Naive thymus-derived CD4-positive, alpha-beta T cell (primary cell): ENCODE measurements at regions of chr9 and their contacts with region 1.

Region 1: DNA sequence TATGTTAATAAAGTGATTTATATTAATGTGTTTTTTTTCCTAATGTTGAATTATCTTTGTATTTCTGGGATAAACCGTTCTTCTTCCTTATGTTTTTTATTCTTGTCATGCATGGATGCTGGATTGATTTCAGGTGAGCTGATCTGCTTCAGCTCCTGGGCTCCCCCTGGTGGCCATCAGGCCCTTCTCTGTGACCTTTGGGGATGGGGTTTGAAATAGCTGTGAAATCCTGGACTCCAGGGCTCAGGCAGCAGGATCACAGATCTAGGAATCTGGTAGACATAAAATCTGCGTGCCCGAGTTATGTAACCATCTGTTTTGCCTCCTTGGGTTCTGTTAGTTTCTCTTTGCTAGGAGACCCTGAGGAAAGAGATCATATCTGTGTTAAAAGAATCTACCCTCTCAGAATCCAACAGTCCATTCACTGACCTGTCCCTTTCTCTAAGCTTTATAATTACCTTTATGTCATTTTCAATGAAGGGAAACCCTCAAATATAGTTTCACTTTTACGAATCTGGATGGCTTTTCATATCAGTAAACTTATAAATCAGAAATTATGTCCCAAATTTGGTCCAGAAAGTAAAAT is 12.2 kb upstream of the OR13J1 start:
- DNase-seq: peak; percentile 54 to 83 (median 71)
- ATAC-seq: peak; percentile 72
- H3K4me3 ChIP-seq: no peak overlapping the region
- H3K4me3 Mint-ChIP-seq: peak overlapping the region in 1 of 10 donors; percentile 18
- H3K27ac ChIP-seq: no peak overlapping the region
- H3K27ac Mint-ChIP-seq: no peak overlapping the region
- H3K4me1 ChIP-seq: no peaks in the 10 kb centered on the region
- H3K4me1 Mint-ChIP-seq: peaks cover 0 to 2% (median 0%) of the 10 kb centered on the region in 7 donors
- H3K27me3 ChIP-seq: no peaks in the 10 kb centered on the region
- H3K27me3 Mint-ChIP-seq: peaks cover 0 to 45% (median 8%) of the 10 kb centered on the region in 5 donors

Region 2: GRCh38 chr9:35481347-35481975 is 400.9 kb before region 1 on chr9:
- CTCF ChIA-PET with region 1: interaction called, 3 read pairs
- POLR2A ChIA-PET with region 1: no interaction called
- intact Hi-C with region 1: loop called in 1 of 2 experiments (anchors 1 kb)
- DNase-seq: peak in 3 of 9 donors; percentile 14 to 38 (median 19)
- ATAC-seq: peak; percentile 68
- H3K4me3 ChIP-seq: no peak overlapping the region
- H3K4me3 Mint-ChIP-seq: no peak overlapping the region
- H3K27ac ChIP-seq: no peak overlapping the region
- H3K27ac Mint-ChIP-seq: no peak overlapping the region
- H3K4me1 ChIP-seq: no peaks in the 10 kb centered on the region
- H3K4me1 Mint-ChIP-seq: no peaks in the 10 kb centered on the region
- H3K27me3 ChIP-seq: peaks cover 0 to 4% of the 10 kb centered on the region in 2 donors
- H3K27me3 Mint-ChIP-seq: peaks cover 0 to 15% (median 8%) of the 10 kb centered on the region in 5 donors

Region 3: DNA sequence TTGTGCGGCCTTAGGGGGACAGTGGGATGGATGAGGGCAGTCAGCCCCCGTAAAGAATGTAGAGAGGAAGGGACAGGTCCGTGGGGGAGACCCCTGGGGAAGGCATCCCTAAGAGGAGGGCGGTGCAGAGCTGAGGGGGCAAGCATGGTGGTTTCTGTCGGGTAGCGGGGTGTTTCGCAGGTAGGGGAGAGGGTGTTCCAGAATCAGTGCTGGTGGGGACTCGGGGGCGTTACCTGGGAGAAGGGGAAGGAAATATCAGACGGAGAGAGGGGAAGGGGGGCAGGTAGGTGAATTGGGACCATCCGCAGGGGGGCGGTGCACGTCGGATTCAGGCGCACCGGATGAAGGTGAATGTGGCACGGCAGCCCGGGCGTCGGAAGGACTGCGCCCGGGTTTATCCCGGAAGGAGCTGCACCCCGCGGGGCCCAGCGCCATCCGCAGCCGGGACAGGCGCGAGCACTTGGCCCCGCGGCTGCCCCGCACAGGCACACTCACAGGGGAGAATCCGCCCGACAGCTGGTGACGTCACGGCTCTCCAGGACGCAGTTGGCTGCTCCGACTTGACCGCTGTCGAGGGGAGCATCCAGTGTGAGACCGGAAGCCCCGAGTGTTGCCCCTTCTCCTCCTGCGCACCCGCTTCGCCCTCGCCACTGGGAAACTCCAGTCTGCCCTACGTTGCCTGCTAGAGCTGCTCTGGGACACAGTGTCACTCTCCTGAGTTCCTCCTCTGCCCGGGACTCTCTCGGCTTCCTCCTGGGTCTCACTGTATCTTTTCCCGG is 265.5 kb before region 1 on chr9:
- CTCF ChIA-PET with region 1: interaction called, 5 read pairs
- POLR2A ChIA-PET with region 1: interaction called, 5 read pairs
- intact Hi-C with region 1: loop called in 1 of 2 experiments (anchors 5 kb)
- DNase-seq: peak; percentile 46 to 71 (median 64)
- ATAC-seq: peak; percentile 80
- H3K4me3 ChIP-seq: peak overlapping the region; percentile 84
- H3K4me3 Mint-ChIP-seq: peak overlapping the region; percentile 82 to 89 (median 86)
- H3K27ac ChIP-seq: peak overlapping the region; percentile 71
- H3K27ac Mint-ChIP-seq: peak overlapping the region; percentile 84 to 93 (median 91)
- H3K4me1 ChIP-seq: peaks cover 27 to 36% of the 10 kb centered on the region in 2 donors
- H3K4me1 Mint-ChIP-seq: peaks cover 33 to 44% (median 38%) of the 10 kb centered on the region in 7 donors
- H3K27me3 ChIP-seq: no peaks in the 10 kb centered on the region
- H3K27me3 Mint-ChIP-seq: no peaks in the 10 kb centered on the region

Region 4: DNA sequence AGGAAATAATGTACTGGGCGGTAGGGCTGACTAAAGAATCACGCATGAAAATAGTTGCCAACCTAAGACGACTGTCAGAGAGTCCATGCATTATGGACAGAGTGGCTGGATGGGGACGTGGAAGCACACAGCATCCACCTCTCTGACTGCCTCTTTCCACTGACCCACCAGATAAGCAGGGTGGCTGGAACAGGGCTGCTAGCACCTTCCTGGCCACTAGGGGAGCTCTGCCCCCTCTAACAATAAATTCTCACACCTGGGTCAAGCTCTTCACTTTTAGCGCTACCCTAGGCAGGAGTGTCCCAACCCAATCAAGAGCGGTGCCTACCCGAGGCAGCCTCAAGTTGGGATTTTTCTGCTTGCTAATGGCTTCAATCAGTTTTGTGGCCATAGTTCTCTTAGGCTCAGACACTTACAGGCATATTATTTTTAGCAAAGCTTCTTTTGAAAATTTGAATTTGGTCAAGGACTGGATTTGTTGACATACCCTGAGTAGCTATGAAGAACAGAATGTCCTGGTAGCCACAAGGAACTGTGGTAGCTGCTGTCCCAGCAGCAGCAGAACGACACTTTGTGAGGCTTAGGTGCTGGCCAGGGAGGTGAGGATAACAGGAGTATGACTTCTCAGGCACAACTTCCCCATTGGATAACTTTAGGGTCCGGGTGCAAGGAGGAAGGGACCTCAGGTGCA is 185.7 kb before region 1 on chr9:
- CTCF ChIA-PET with region 1: interaction called, 3 read pairs
- POLR2A ChIA-PET with region 1: no interaction called
- intact Hi-C with region 1: loop called in 1 of 2 experiments (anchors 1 kb)
- DNase-seq: peak in 8 of 9 donors; percentile 15 to 56 (median 41)
- ATAC-seq: peak; percentile 91
- H3K4me3 ChIP-seq: no peak overlapping the region
- H3K4me3 Mint-ChIP-seq: no peak overlapping the region
- H3K27ac ChIP-seq: no peak overlapping the region
- H3K27ac Mint-ChIP-seq: peak overlapping the region in 8 of 9 donors; percentile 33 to 85 (median 66)
- H3K4me1 ChIP-seq: peaks cover 0 to 10% of the 10 kb centered on the region in 2 donors
- H3K4me1 Mint-ChIP-seq: peaks cover 6 to 15% (median 12%) of the 10 kb centered on the region in 7 donors
- H3K27me3 ChIP-seq: no peaks in the 10 kb centered on the region
- H3K27me3 Mint-ChIP-seq: no peaks in the 10 kb centered on the region

Region 5: DNA sequence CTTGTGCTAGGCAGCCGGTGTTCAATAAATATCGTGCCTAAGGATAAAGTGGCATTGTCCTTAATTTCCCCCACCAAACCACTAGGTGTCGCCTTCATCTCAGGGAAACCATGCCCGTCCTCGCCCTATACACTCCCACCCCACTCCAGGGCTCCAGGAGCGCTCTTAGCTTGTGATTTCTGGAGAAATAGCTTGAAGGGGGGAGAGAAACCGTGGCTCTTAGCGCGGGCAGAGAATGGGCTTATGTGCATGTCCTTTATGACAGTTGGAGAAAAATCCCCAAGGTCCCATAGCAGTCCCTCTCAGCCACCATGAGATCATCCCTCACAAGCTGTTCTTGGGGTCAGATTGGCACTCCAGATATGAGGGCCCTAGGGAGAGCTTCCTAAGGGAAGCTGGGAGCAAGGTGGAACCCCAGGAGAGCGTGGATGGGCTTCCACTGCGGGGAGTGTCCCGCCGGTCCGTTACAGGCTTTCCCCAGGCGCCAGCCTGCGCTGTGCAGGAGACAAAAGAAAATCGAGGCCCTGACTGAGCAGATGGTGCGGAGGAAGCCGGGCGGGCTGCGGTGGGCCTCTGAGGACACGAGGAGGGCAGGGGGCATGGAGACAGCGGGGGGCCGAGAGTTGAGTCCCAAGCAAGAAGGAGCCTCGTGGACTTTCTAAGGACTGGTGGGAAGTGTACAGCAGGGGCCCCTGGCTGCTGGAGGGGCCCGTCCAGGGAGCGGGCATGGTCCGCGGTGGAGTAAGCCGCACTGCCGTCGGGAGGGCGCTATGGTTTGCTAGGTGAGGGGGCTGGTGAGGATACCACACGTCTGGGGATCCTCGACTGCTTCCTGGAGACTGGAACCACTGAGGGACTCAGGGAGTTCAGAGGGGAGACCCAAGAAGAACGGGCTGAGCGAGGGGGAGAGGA is 91.7 kb before region 1 on chr9:
- CTCF ChIA-PET with region 1: interaction called, 70 read pairs
- POLR2A ChIA-PET with region 1: no interaction called
- intact Hi-C with region 1: loop called (anchors 1 kb)
- DNase-seq: peak; percentile 36 to 70 (median 62)
- ATAC-seq: peak; percentile 90
- H3K4me3 ChIP-seq: no peak overlapping the region
- H3K4me3 Mint-ChIP-seq: peak overlapping the region in 2 of 10 donors; percentile 31 to 58
- H3K27ac ChIP-seq: no peak overlapping the region
- H3K27ac Mint-ChIP-seq: no peak overlapping the region
- H3K4me1 ChIP-seq: no peaks in the 10 kb centered on the region
- H3K4me1 Mint-ChIP-seq: peaks cover 6 to 21% (median 10%) of the 10 kb centered on the region in 7 donors
- H3K27me3 ChIP-seq: no peaks in the 10 kb centered on the region
- H3K27me3 Mint-ChIP-seq: no peaks in the 10 kb centered on the region

Region 6: DNA sequence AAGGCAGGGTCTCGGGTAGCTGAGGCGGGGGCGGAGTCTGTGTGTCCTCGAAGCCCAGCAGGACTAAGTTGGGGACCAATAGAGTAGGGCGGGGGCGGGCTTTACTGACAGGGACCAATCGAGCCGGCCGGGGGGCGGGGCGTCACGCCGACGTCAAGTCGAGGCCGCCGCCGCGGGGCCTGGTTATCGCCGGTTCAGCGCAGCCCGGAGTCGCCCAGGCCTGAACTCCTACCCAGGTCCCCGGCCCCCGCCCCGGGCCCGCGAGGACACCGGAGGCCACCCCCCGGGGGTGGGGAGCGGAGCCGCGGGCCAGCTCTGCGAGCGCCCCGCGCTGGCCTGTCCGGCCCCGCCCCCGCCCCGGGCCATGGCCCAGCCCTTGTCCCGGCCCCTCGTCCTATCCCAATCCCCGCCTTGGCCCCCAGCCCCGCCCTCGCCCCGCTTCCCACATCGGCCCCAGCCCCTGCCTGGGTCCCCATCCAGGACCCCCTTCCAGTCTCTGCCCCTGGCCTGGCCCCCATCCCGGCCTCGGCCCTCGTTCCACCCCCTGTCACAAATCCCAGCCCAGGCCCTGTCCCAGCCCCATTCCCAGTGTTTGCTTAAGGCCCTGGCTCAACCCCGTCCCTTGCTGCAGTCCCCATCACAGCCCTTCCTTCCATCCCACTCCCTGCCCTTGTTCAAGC is 53.1 kb before region 1 on chr9 and contains the start of gene TMEM8B:
- CTCF ChIA-PET with region 1: interaction called, 11 read pairs
- POLR2A ChIA-PET with region 1: interaction called, 3 read pairs
- intact Hi-C with region 1: loop called (anchors 1 kb)
- DNase-seq: peak; percentile 80 to 95 (median 88)
- ATAC-seq: peak; percentile 95
- H3K4me3 ChIP-seq: peak within 1 kb of the TSS; percentile 88
- H3K4me3 Mint-ChIP-seq: peak within 1 kb of the TSS; percentile 84 to 100 (median 94)
- H3K27ac ChIP-seq: peak within 1 kb of the TSS; percentile 94
- H3K27ac Mint-ChIP-seq: peak within 1 kb of the TSS; percentile 91 to 99 (median 94)
- H3K4me1 ChIP-seq: peaks cover 4 to 14% of the 10 kb centered on the region in 2 donors
- H3K4me1 Mint-ChIP-seq: peaks cover 25 to 48% (median 43%) of the 10 kb centered on the region in 7 donors
- H3K27me3 ChIP-seq: no peaks in the 10 kb centered on the region
- H3K27me3 Mint-ChIP-seq: peaks cover 0 to 5% (median 0%) of the 10 kb centered on the region in 5 donors
- total RNA-seq, gene TMEM8B: 3.9 to 11.6 (median 10.6) TPM